ENCODE measurements at regions of chr7 and their contacts with region 1.

Region 1: DNA sequence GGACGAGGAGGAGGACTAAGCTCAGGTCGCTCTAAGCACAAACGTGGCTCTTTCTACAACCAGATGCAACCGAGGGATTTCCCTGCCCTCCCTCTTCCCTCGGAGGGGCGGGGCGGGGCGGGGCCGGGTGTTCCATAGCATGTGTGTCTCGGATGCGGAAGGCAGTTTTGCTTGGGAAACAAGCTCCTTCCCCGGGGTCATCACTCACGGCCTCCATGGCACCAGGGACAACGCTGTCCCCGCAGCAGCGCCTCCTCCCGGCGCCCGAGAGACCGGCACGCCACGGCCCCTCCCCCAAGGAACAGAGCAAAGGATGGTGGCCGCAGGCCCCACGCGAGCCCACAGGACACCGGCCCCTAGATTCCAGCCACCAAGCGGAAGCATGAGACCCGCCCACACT is 110.5 kb downstream of the PAXIP1 start:
- DNase-seq: no peak
- ATAC-seq: no peak
- H3K4me3 ChIP-seq: no peak overlapping the region
- H3K27ac ChIP-seq: no peak overlapping the region
- H3K4me1 ChIP-seq: no peaks in the 10 kb centered on the region
- H3K27me3 ChIP-seq: peaks cover 0 to 21% (median 12%) of the 10 kb centered on the region in 3 donors
- CTCF ChIP-seq: no peak

Region 2: GRCh38 chr7:153701678-153702077 is 1190.8 kb before region 1 on chr7:
- intact Hi-C with region 1: loop called in 1 of 2 experiments (anchors 10 kb)
- DNase-seq: no peak
- ATAC-seq: no peak
- H3K4me3 ChIP-seq: no peak overlapping the region
- H3K27ac ChIP-seq: no peak overlapping the region
- H3K4me1 ChIP-seq: no peaks in the 10 kb centered on the region
- H3K27me3 ChIP-seq: no peaks in the 10 kb centered on the region
- CTCF ChIP-seq: no peak

Region 3: GRCh38 chr7:154672659-154673415 is 219.6 kb before region 1 on chr7:
- intact Hi-C with region 1: no loop called
- DNase-seq: no peak
- ATAC-seq: no peak
- H3K4me3 ChIP-seq: no peak overlapping the region
- H3K27ac ChIP-seq: no peak overlapping the region
- H3K4me1 ChIP-seq: no peaks in the 10 kb centered on the region
- H3K27me3 ChIP-seq: no peaks in the 10 kb centered on the region
- CTCF ChIP-seq: no peak

Measured in psoas muscle (tissue), 8 donors.